Endothelial cell of umbilical vein (primary cell): ENCODE measurements at regions of chr4 and their contacts with region 1.

Region 1: DNA sequence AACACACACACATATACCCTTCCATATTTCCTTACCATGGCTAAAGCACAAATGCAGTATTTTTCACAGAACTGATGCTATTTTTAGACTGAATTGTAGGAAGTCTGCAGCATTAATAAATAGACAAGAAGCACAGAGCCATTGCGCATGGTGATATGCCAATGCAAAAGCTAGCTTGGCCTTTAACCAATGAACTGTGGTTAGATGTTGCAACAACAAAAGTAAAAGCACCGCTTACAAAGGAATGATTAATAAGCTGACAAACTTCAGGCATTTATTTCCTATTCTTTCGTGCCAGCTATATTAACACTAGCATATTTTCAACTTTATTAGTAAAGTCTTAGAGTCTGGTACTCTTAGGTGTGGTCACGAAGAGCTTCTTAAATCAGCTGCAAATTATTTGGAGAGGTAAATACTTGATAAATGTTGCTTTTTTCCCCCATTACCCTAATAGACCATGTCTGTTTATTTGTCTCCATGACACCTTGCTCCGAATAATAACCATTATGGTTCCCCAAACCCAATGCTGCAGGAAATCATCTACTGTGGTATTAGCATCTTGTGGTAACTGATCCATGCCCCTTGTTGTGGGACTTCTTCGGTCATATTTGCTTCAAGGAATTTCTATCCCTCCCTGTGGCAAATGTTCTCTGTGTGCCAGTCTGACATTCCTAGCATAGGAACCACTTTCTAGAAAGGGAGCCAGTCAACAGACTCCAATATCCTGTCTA is 306.1 kb upstream of the TAPT1 start:
- DNase-seq: peak; percentile 96
- H3K4me3 ChIP-seq: no peak overlapping the region
- H3K27ac ChIP-seq: peak overlapping the region; percentile 15
- H3K4me1 ChIP-seq: peaks cover 22% of the 10 kb centered on the region
- H3K27me3 ChIP-seq: no peaks in the 10 kb centered on the region
- CTCF ChIP-seq: no peak
- POLR2A ChIP-seq: no peak

Region 2: DNA sequence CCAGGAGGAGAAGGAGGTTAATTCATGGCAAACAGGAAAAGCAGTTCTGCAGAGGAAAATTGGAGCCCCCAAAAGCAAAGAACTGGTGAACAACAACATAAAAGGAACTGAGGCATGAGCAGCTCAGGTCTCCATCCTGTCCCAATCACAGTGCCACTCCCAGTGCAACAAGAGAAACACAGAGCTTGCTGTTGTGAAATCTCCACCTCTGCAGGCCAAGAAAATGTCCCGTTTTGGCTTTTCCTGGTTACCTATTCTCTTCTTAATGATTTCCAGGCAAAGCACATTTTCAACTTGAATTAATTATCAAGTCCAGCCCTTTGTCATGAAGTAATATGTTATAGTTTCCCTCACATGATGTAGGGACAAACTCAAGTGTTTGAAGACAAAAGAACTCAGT is 1103.8 kb before region 1 on chr4:
- CTCF ChIA-PET with region 1: no interaction called
- POLR2A ChIA-PET with region 1: no interaction called
- dilution Hi-C with region 1: no loop called
- intact Hi-C with region 1: no loop called
- DNase-seq: no peak
- H3K4me3 ChIP-seq: no peak overlapping the region
- H3K27ac ChIP-seq: no peak overlapping the region
- H3K4me1 ChIP-seq: no peaks in the 10 kb centered on the region
- H3K27me3 ChIP-seq: no peaks in the 10 kb centered on the region
- CTCF ChIP-seq: no peak
- POLR2A ChIP-seq: no peak

Region 3: DNA sequence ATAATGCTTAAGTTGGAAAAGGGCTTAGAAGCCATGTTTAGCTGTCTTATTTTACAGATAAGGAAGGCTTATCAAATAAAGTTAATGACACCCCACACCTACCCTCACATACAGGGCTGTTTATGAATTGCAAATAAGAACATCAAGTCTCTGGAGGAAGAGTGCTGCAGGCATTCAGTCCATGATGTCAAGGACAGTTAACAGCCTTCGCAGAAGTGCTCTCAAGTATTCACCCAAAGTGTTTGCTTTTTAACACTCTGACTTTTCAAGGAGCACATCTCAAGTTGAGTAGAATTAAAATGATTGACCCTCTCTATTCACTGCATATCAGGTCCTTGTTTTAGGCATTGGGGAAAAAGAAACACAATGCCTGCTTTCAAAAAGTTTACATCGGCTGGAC is 37.4 kb after region 1 on chr4:
- CTCF ChIA-PET with region 1: no interaction called
- POLR2A ChIA-PET with region 1: no interaction called
- dilution Hi-C with region 1: no loop called
- intact Hi-C with region 1: loop called (anchors 1 kb)
- DNase-seq: no peak
- H3K4me3 ChIP-seq: no peak overlapping the region
- H3K27ac ChIP-seq: no peak overlapping the region
- H3K4me1 ChIP-seq: no peaks in the 10 kb centered on the region
- H3K27me3 ChIP-seq: no peaks in the 10 kb centered on the region
- CTCF ChIP-seq: no peak
- POLR2A ChIP-seq: no peak